ENCODE measurements at regions of chr19 and their contacts with region 1.

Region 1: DNA sequence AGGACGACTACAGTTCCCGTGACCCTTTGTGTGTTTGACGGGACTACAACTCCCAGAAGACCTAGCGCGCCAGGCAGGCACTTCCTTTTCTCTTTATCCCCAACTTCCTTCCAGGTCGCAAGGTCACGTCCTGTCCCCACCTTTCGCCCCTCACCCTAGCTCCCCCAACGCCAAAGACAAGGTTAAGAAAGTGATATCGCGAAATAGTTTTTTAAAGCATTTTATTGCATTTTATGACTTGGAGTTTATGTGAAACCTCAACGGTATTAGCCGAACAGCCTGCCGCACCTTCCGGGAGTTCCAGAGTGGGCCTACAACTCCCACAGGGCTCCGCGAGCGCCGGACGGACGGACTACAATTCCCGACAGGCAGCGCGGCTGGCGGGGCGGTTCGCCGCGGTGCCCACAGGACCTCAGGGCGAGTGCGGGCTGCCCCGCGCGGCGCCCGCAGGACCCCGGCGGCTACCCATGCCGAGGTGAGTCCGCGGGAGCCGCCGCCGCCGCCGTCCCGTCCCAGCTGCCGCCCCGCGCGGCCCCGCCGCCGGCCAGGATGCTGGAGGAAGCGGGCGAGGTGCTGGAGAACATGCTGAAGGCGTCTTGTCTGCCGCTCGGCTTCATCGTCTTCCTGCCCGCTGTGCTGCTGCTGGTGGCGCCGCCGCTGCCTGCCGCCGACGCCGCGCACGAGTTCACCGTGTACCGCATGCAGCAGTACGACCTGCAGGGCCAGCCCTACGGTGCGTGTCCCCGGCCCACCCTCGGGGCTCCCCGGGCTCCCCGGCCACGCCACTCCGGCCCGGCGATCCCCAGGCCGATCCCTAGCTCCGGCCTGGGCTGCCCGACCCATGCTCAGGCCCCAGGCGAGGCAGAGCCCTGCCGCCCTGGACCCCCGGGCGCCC is at the start of gene NCLN:
- DNase-seq: peak; percentile 88 to 92 (median 89)
- H3K4me3 ChIP-seq: peak within 1 kb of the TSS; percentile 53 to 79 (median 78)
- H3K4me3 Mint-ChIP-seq: peak within 1 kb of the TSS; percentile 95 to 98
- H3K27ac ChIP-seq: peak within 1 kb of the TSS; percentile 54 to 82
- H3K27ac Mint-ChIP-seq: peak within 1 kb of the TSS; percentile 94 to 100 (median 99)
- H3K4me1 ChIP-seq: peaks cover 76 to 84% of the 10 kb centered on the region in 2 donors
- H3K4me1 Mint-ChIP-seq: peaks cover 72% of the 10 kb centered on the region
- H3K27me3 ChIP-seq: no peaks in the 10 kb centered on the region
- H3K27me3 Mint-ChIP-seq: peaks cover 0 to 2% (median 0%) of the 10 kb centered on the region in 3 donors
- CTCF ChIP-seq: no peak
- polyA plus RNA-seq, gene NCLN: 28.6 to 60.9 (median 34.5) TPM

Region 2: GRCh38 chr19:2820112-2820702 is 365.5 kb before region 1 on chr19:
- intact Hi-C with region 1: loop called in 1 of 2 experiments (anchors 10 kb)
- DNase-seq: no peak
- H3K4me3 ChIP-seq: peak overlapping the region; percentile 34 to 81 (median 38)
- H3K4me3 Mint-ChIP-seq: peak overlapping the region; percentile 73 to 90
- H3K27ac ChIP-seq: peak overlapping the region in 1 of 2 donors; percentile 8
- H3K27ac Mint-ChIP-seq: peak overlapping the region in 2 of 7 donors; percentile 31 to 38
- H3K4me1 ChIP-seq: peaks cover 5 to 6% of the 10 kb centered on the region in 2 donors
- H3K4me1 Mint-ChIP-seq: peaks cover 9% of the 10 kb centered on the region
- H3K27me3 ChIP-seq: no peaks in the 10 kb centered on the region
- H3K27me3 Mint-ChIP-seq: peaks cover 0 to 2% (median 2%) of the 10 kb centered on the region in 3 donors
- CTCF ChIP-seq: no peak

Region 3: GRCh38 chr19:2950286-2951124 is 235.2 kb before region 1 on chr19:
- intact Hi-C with region 1: loop called in 1 of 2 experiments (anchors 1 kb)
- DNase-seq: peak; percentile 99
- H3K4me3 ChIP-seq: peak overlapping the region; percentile 55 to 90 (median 62)
- H3K4me3 Mint-ChIP-seq: peak overlapping the region; percentile 95 to 97
- H3K27ac ChIP-seq: peak overlapping the region; percentile 90 to 94
- H3K27ac Mint-ChIP-seq: peak overlapping the region; percentile 97 to 99 (median 99)
- H3K4me1 ChIP-seq: peaks cover 16 to 19% of the 10 kb centered on the region in 2 donors
- H3K4me1 Mint-ChIP-seq: peaks cover 14% of the 10 kb centered on the region
- H3K27me3 ChIP-seq: no peaks in the 10 kb centered on the region
- H3K27me3 Mint-ChIP-seq: peaks cover 0 to 5% (median 0%) of the 10 kb centered on the region in 3 donors
- CTCF ChIP-seq: no peak

Region 4: DNA sequence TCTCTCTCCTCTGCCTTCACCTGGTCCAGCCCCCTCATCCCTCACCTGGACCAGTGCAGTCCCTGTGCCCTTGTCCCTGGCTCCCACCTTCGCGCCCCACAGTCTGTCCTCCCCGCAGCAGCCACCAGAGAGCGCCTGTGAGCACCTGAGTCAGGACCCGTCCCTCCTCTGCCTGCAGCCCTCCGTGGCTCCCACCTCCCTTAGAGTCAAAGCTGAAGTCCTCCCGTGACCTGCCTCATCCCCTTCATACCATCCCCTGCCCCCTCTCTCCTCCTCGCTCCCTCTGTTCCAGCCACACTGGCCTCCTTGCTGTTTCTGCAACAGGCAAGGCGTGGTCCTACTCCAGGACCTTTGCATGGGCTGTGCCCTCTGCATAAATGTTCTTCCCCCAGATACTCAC is 49.1 kb after region 1 on chr19:
- intact Hi-C with region 1: no loop called
- DNase-seq: no peak
- H3K4me3 ChIP-seq: no peak overlapping the region
- H3K4me3 Mint-ChIP-seq: no peak overlapping the region
- H3K27ac ChIP-seq: no peak overlapping the region
- H3K27ac Mint-ChIP-seq: no peak overlapping the region
- H3K4me1 ChIP-seq: no peaks in the 10 kb centered on the region
- H3K4me1 Mint-ChIP-seq: no peaks in the 10 kb centered on the region
- H3K27me3 ChIP-seq: peaks cover 0 to 9% of the 10 kb centered on the region in 2 donors
- H3K27me3 Mint-ChIP-seq: peaks cover 7 to 9% (median 7%) of the 10 kb centered on the region in 3 donors
- CTCF ChIP-seq: no peak

Region 5: GRCh38 chr19:3314962-3315675 is 129.4 kb after region 1 on chr19:
- intact Hi-C with region 1: no loop called
- DNase-seq: no peak
- H3K4me3 ChIP-seq: no peak overlapping the region
- H3K4me3 Mint-ChIP-seq: no peak overlapping the region
- H3K27ac ChIP-seq: no peak overlapping the region
- H3K27ac Mint-ChIP-seq: no peak overlapping the region
- H3K4me1 ChIP-seq: no peaks in the 10 kb centered on the region
- H3K4me1 Mint-ChIP-seq: no peaks in the 10 kb centered on the region
- H3K27me3 ChIP-seq: peaks cover 0 to 3% of the 10 kb centered on the region in 2 donors
- H3K27me3 Mint-ChIP-seq: peaks cover 14 to 37% (median 16%) of the 10 kb centered on the region in 3 donors
- CTCF ChIP-seq: no peak

Measured in CD14-positive monocyte (primary cell).